Posterior cingulate gyrus (tissue), 11 donors: ENCODE measurements at regions of chr2 and their contacts with region 1.

Region 1: DNA sequence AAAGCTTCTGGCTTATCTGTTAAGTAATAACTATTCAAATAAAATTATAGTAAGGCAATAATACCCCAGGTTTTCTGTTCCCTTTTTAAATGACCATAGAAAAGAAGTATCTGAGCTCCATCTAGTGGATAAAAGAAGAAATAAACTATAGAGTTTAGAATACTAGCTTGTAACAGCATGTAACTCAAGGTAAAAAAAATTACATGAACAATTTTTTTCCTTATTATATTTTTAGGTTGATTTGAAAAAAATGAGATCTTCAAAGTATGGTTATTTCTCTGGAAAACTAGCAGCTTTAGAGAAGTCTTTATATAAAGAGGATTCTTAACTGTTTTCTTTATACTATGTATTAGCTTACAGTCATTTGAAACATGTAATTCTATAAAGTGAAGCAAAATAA is 58.1 kb downstream of the NCKAP1 start:
- DNase-seq: no peak

Region 2: DNA sequence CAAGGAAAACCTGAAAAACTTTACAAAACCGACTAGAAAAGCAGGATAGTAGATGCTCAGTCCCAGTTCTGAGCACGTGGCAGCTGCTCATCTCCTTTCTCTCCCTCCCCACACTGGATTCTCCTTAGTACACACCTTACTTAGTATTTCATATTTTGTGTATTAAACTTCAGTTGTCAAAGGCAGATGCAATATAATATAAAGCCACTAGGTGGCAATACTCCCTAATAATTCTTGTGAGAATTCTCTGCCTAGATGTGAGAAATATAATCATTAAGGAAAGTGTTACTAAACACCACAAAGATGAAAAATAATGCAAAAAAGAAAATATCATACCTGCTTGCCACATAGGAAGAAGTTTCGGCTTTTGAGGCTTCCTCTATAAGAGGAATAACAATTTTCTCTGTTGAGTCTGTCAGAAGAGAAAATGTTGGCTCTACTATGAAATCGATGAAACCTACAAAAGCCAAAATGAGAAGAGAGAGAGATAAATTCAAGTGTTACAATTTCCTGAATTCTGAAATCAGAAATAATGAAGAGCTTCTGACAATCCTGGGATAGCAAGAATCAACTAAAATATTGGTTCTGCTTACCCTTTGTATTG is 793.9 kb before region 1 on chr2:
- intact Hi-C with region 1: loop called (anchors 10 kb)
- DNase-seq: no peak

Region 3: DNA sequence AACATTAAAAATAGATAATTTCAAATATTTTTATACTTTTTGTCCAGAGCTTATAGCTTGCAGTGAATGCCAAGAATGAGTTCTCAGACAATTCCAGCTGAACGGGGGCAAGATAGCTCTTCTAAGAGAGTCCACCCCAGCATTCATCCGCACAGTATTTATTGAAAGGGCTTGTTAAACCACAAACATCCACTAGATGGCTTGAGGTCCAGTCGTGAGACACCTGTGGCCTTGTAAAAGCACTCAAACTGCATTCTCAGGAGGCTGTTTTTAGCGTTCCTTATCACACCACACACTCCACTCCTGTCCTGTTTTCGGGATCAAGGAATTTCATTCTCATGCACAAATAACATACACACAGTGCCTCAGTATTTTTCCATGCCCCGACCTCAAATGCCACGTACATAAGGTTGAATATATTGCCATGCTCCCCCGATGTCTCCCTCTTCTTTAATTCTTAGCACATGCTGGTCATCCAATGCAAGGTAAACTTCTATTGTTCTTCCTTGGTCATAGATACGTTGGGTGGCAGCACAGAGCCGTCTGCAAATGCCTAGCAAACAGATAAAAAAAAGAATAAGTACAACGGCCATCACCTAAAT is 216.7 kb before region 1 on chr2:
- intact Hi-C with region 1: loop called (anchors 5 kb)
- DNase-seq: no peak

Region 4: GRCh38 chr2:182784777-182785176 is 195.3 kb before region 1 on chr2:
- intact Hi-C with region 1: loop called (anchors 2 kb)
- DNase-seq: no peak